AG04450 (cell line): ENCODE measurements at regions of chr15 and their contacts with region 1.

Region 1: DNA sequence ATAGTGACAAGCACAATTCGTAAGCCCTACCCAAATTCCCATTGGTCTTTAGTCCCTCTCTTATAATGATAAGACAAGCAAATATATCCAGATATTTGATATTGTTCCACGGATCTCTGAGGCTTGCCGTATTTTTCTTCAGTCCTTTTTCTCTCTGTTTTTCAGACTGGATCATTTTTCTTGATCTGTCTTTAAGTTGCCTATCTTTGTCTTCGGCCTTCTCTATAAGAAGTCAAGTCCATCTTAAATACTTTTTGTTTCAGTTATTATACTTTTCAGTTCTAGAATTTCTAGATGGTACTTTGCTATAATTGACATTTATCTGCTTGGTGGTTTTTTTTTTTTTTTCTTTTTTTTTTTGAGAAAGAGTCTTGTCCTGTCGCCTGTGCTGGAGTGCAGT is 13.7 kb upstream of the BLM start:
- DNase-seq: no peak
- H3K4me3 ChIP-seq: no peak overlapping the region
- H3K27ac ChIP-seq: no peak overlapping the region
- H3K27me3 ChIP-seq: no peaks in the 10 kb centered on the region
- CTCF ChIP-seq: no peak

Region 2: DNA sequence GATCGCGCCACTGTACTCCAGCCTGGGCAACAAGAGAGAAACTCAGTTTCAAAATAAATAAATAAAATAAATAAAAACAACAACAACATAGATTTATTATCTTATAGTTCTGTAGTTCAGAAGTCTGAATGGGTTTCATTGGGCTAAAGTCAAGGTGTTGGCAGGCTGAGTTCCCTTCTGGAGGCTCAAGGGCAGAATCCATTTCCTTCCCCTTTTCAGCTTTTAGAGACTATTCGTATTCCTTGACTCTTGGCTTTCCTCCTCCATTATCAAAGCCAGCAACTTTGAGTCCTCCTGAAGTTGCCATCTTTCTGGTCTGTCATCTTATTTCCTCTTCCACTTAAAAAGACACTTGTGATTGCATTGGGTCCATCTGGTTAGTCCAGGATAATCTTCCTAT is 25.8 kb after region 1 on chr15:
- CTCF ChIA-PET with region 1: interaction called, 11 read pairs
- POLR2A ChIA-PET with region 1: no interaction called
- DNase-seq: no peak
- H3K4me3 ChIP-seq: no peak overlapping the region
- H3K27ac ChIP-seq: peak overlapping the region; percentile 11
- H3K27me3 ChIP-seq: no peaks in the 10 kb centered on the region
- CTCF ChIP-seq: no peak